GM13976 (cell line): ENCODE measurements at regions of chr15 and their contacts with region 1.

Region 1: DNA sequence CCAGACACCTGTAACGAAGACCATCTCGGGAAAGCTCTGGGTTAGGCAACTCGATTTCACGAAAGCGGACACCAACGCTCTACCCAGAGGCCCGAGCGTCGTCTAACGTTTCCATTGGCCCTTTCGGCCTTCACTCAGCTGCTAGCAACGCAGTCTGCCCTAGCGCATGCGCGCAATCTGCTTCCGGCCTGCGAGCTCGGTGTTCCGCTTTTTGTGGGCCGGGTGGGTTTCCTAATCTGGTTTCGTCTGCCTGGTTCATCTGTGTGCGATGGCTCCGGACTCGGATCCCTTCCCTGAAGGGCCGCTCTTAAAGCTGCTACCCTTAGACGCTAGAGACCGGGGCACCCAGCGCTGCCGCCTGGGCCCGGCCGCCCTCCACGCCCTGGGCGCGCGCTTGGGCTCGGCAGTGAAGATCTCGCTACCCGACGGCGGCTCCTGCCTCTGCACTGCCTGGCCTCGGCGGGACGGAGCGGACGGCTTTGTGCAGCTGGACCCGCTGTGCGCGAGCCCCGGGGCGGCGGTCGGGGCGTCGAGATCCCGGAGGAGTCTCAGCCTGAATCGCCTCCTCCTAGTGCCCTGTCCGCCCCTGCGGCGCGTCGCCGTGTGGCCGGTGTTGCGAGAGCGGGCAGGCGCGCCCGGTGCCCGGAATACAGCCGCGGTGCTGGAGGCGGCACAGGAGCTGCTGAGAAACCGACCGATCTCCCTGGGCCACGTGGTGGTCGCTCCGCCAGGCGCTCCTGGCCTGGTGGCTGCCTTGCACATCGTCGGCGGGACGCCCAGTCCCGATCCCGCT is 24.0 kb upstream of the GATM start:
- DNase-seq: peak; percentile 94
- CTCF ChIP-seq: no peak

Region 2: DNA sequence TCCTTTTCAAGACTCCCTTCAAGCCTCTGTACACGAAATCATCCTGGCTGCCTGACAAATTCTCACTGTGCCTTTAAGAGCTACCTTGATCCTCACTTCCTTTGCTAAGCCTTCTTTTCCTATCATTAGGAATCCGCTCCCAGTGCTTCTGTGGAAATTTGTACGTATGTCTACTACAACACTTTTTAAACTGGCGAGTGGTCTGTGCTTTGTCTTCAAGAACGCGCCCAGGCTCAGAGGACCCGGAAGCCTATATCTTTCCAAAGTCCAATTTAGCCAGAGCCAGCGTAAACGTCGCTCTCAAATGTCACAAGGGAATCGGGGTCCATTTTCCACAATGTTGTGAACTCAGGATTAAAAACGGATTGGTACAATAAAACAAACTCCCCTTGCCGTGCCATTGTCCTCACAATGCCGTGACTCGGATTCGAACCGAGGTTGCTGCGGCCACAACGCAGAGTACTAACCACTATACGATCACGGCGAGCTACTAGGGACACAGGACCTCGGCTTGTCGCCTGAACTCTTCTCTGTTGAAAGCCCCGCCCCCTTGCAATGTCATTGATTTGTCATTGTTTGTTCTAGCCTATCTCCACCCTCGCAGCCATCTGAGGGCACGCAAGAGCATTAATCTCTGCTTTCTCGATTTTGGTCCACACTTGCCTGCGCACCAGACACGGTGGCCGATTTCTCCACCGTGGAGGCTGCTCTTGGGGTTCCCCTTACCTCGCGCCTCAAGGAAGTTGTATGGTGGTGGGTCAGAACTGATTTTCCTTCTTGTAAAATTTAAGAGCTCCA is 202.2 kb before region 1 on chr15:
- in situ Hi-C with region 1: loop called (anchors 10 kb)
- DNase-seq: peak; percentile 81
- CTCF ChIP-seq: no peak

Region 3: DNA sequence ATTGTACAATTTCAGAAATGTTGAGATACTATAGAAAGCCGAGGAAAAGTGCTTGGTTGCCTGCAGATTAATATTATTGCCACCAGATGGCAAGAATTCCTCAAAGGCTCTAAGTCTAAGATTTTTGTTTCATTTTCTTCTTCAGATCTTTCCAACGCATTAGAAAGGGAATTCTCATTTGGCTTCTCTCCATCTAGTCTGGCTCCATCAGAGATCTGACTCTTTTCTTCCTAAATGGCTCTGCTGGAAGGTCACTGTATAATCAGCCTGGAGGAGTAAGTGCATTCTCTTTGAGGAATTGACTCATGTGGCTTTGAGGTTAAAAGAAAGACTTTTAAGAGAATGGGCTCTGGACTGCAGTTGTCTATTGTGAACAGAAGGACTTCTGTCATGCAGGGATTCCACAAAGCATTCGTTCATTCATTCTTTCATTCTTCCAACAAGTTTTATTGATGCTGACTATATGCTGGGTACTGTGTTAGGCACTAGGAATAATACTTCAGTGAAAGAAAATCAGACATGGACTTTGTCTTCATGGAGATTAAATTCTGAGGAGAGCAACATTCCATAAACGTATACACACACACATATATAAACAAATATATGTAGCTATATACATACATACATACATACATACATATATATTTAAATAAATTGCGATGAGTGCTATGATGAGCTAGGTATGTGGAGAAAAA is 95.0 kb before region 1 on chr15:
- in situ Hi-C with region 1: loop called (anchors 10 kb)
- DNase-seq: peak; percentile 45
- CTCF ChIP-seq: peak; percentile 34

Region 4: GRCh38 chr15:45351229-45351628 is 51.1 kb before region 1 on chr15:
- in situ Hi-C with region 1: no loop called
- DNase-seq: no peak
- CTCF ChIP-seq: no peak

Region 5: DNA sequence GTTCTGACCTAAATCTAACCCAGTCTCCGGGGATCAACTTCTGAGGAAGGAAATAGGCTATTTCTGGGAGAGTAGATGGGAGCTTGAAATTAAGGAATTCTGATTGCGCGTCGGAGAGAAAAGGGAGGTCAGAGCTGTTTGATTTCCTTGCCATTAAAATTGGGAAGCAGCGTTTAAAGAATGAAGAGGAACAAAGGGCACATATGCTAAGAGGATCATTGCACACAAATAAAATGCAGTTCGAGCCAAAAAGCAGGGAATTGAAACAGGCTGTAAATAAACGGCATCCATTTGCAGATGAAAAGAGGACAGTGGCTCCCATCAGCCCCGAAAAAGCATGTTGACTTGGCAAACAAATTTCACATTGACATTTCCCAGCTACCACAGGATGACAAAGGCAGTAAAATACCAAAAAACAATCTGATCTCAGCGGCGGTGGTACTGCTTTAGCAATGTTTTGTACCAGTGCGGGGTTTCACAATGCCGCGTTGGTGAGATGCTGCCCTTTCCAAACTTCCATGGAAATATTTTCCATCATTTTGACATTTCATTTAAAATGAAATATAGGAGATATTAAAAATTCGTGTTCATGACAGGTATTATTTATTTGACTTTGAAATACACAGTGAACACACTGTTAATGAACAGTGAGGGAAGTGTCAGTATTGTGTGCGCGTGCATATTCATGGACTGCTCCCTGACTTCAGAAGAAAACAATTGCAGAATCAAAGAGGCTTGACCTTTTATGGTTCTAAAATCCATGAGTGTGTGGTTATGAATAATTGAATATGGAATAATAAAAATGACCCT is 341.3 kb after region 1 on chr15:
- in situ Hi-C with region 1: no loop called
- DNase-seq: no peak
- CTCF ChIP-seq: no peak